Pancreas (tissue), 10 donors: ENCODE measurements at regions of chr3 and their contacts with region 1.

Region 1: GRCh38 chr3:182713743-182714517 is 79.4 kb upstream of the ATP11B start:
- DNase-seq: no peak
- ATAC-seq: peak; percentile 75 to 88 (median 82)
- H3K4me3 ChIP-seq: no peak overlapping the region
- H3K27ac ChIP-seq: no peak overlapping the region
- H3K4me1 ChIP-seq: peaks cover 11 to 23% (median 22%) of the 10 kb centered on the region in 3 donors
- H3K27me3 ChIP-seq: no peaks in the 10 kb centered on the region
- CTCF ChIP-seq: peak; percentile 11 to 42 (median 34)

Region 2: DNA sequence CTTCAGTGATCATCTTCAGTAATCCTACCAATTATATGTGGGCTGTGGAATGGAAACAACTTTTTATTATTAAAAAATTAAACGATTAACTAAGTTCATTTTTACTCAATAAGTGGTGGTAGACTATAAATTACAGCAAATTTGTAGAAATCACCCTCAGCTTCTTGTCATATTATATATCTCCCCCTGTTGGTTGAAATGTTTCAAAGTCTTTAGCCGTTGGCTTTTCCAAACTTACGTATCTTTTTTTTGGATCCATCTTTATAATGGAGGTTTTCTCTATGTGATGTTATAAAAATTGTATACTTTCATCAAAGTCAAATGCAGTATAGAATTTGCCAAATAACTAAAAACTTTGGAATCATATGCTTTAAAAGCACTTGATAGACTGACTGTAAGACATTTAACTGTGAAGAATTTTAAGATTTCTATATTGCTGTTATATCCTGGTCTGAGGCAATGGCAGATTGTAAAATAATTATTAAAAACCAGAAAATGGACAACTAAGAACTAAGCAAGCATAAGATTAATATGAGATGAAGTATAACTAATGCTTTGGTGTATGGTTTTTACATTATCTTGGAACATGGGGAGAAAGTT is 124.0 kb after region 1 on chr3:
- intact Hi-C with region 1: loop called in 2 of 3 experiments (anchors 10 kb)
- DNase-seq: no peak
- ATAC-seq: peak in 2 of 4 donors; percentile 57 to 65
- H3K4me3 ChIP-seq: no peak overlapping the region
- H3K27ac ChIP-seq: no peak overlapping the region
- H3K4me1 ChIP-seq: no peaks in the 10 kb centered on the region
- H3K27me3 ChIP-seq: no peaks in the 10 kb centered on the region
- CTCF ChIP-seq: peak; percentile 11 to 23 (median 19)

Region 3: GRCh38 chr3:182843478-182843877 is 129.5 kb after region 1 on chr3:
- intact Hi-C with region 1: loop called in 2 of 3 experiments (anchors 10 kb)
- DNase-seq: no peak
- ATAC-seq: no peak
- H3K4me3 ChIP-seq: no peak overlapping the region
- H3K27ac ChIP-seq: no peak overlapping the region
- H3K4me1 ChIP-seq: no peaks in the 10 kb centered on the region
- H3K27me3 ChIP-seq: no peaks in the 10 kb centered on the region
- CTCF ChIP-seq: no peak